Caco-2 (cell line): ENCODE measurements at regions of chr10 and their contacts with region 1.

Region 1: GRCh38 chr10:118568327-118568848 is 27.1 kb downstream of the PRLHR start:
- DNase-seq: peak in 1 of 2 experiments; percentile 74
- H3K4me3 ChIP-seq: no peak overlapping the region
- H3K4me3 Mint-ChIP-seq: no peak overlapping the region
- H3K27ac Mint-ChIP-seq: no peak overlapping the region
- H3K4me1 ChIP-seq: no peaks in the 10 kb centered on the region
- H3K4me1 Mint-ChIP-seq: no peaks in the 10 kb centered on the region
- H3K27me3 ChIP-seq: 0 out of 2 replicates have a peak, but pooled peaks cover 1% of the 10 kb centered on the region
- H3K27me3 Mint-ChIP-seq: no peaks in the 10 kb centered on the region
- CTCF ChIP-seq: peak; percentile 66 to 81

Region 2: DNA sequence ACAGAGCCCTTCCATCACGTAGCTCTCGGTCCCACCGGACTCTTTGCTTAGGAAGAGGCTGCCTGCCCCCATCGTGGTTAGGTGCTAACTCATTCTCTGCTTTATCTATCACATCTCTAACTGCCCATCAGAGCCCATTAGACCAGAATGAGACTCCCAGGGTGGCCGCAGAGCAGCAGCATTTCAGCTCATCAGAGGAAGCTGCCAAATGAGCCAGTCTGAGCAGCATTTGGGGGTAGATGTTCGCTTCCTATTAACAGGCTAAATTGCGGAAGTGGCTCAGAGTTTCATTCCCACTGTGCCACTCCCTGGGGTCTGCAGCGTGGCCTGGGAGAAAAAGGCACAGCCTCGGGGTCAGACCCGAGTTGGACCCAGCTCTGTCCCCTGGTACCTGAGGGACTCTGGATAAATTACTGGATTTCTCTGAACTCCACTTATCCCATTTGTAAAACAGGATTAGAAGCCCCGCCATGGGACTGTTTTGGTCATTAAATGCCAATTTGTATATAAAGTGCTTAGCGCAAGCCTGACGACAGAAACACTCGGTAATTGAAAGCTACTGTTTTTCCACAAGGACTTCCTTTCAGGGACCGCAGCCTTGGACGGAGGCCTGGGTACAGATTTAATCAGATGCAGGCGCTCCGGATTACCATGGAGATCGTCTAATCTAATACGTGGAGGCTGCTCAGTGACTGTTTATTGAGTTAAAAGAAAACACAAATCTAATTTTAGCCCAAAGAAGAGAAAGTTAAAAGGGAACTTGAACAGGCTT is 100.8 kb after region 1 on chr10:
- CTCF ChIA-PET with region 1: interaction called, 4 read pairs
- POLR2A ChIA-PET with region 1: no interaction called
- intact Hi-C with region 1: loop called (anchors 5 kb)
- DNase-seq: no peak
- H3K4me3 ChIP-seq: no peak overlapping the region
- H3K4me3 Mint-ChIP-seq: no peak overlapping the region
- H3K27ac Mint-ChIP-seq: no peak overlapping the region
- H3K4me1 ChIP-seq: no peaks in the 10 kb centered on the region
- H3K4me1 Mint-ChIP-seq: no peaks in the 10 kb centered on the region
- H3K27me3 ChIP-seq: no peaks in the 10 kb centered on the region
- H3K27me3 Mint-ChIP-seq: peaks cover 4% of the 10 kb centered on the region
- CTCF ChIP-seq: no peak

Region 3: DNA sequence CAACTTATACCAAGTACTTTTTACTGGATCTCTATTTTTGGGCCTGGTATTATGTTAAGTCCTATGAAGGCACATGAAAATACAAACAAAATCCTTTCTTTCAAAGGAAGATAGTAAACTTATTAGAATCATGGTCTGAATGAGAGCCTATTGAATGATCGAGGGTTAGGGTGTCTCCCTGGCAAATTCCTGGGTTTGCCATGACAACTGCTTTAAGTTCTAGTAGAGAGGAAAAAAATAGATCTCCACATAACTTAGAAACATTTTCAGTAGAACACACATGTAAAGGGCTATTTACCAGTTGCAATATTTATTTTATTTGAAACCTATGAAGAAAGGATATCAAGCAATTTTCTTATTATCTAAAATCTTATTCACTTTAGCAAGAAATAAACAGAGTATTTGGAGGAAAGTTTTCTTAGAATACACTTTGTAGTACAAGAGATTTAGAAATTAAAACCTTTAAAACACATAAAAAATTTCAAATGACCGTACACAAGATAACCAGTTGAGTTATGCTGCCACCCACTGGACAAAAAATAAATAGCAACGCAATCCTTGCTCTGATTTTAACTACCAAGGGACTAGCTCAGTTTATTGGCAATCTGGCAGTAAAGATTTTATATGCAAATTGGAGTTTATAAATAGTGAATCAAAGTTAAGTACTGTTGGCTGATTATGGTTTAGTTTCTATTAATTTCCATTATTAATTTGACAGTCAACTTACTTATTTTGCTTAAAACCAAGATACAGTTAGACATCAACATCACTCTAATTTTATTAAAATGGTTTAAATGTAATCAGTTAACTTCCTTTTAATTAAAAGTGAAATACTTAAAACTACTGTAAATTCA is 152.5 kb after region 1 on chr10:
- CTCF ChIA-PET with region 1: interaction called, 13 read pairs
- POLR2A ChIA-PET with region 1: no interaction called
- intact Hi-C with region 1: loop called (anchors 1 kb)
- DNase-seq: peak in 1 of 2 experiments; percentile 62
- H3K4me3 ChIP-seq: no peak overlapping the region
- H3K4me3 Mint-ChIP-seq: no peak overlapping the region
- H3K27ac Mint-ChIP-seq: no peak overlapping the region
- H3K4me1 ChIP-seq: no peaks in the 10 kb centered on the region
- H3K4me1 Mint-ChIP-seq: no peaks in the 10 kb centered on the region
- H3K27me3 ChIP-seq: no peaks in the 10 kb centered on the region
- H3K27me3 Mint-ChIP-seq: no peaks in the 10 kb centered on the region
- CTCF ChIP-seq: peak; percentile 51 to 66

Region 4: GRCh38 chr10:118850418-118851061 is 282.2 kb after region 1 on chr10:
- CTCF ChIA-PET with region 1: interaction called, 3 read pairs
- POLR2A ChIA-PET with region 1: no interaction called
- intact Hi-C with region 1: loop called (anchors 1 kb)
- DNase-seq: peak; percentile 62 to 70
- H3K4me3 ChIP-seq: no peak overlapping the region
- H3K4me3 Mint-ChIP-seq: no peak overlapping the region
- H3K27ac Mint-ChIP-seq: no peak overlapping the region
- H3K4me1 ChIP-seq: no peaks in the 10 kb centered on the region
- H3K4me1 Mint-ChIP-seq: no peaks in the 10 kb centered on the region
- H3K27me3 ChIP-seq: no peaks in the 10 kb centered on the region
- H3K27me3 Mint-ChIP-seq: peaks cover 6% of the 10 kb centered on the region
- CTCF ChIP-seq: peak; percentile 57 to 66

Region 5: DNA sequence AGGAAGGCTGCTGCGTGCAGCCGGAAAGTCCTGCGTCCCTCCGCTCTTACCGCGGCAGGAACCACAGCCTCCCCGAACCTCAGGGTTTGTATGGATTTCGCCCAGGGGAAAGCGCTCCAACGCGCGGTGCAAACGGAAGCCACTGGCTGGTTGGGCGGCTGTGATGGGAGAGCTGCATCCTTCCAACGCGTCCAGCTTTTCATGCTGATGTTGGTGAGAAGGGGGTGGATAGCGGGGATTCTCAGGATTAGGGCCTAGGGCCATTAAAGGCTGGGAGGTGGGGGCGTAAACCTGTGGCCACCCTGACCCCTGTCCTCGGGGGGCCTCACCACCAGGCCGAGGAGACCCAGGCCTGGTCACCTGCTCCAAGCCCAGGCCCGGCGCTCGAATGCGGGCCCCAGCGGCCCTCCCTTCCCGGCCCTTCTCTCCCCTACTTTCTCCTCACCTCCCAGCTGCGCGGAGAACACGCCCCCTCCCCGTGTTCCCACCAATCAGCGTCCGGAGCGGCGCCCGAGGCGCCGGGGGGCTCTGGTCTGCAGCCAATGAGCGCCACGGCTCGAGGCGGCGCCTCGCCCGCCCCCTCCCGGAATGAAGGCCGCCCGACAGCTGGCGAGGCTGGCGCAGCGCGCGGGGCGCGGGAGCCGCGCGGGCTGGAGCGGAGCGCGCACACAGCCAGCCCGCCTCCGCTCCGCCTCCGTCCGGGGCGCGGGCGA is 460.7 kb after region 1 on chr10:
- CTCF ChIA-PET with region 1: no interaction called
- POLR2A ChIA-PET with region 1: no interaction called
- intact Hi-C with region 1: loop called (anchors 5 kb)
- DNase-seq: peak; percentile 95 to 97
- H3K4me3 ChIP-seq: peak overlapping the region; percentile 68
- H3K4me3 Mint-ChIP-seq: peak overlapping the region; percentile 65
- H3K27ac Mint-ChIP-seq: no peak overlapping the region
- H3K4me1 ChIP-seq: peaks cover 11% of the 10 kb centered on the region; the same call in 1 of the 2 replicates
- H3K4me1 Mint-ChIP-seq: peaks cover 9% of the 10 kb centered on the region
- H3K27me3 ChIP-seq: no peaks in the 10 kb centered on the region
- H3K27me3 Mint-ChIP-seq: no peaks in the 10 kb centered on the region
- CTCF ChIP-seq: peak in 1 of 2 experiments; percentile 18